Caco-2 (cell line): ENCODE measurements at regions of chr12 and their contacts with region 1.

Region 1: GRCh38 chr12:113727651-113728061 is 238.5 kb downstream of the RBM19 start:
- DNase-seq: peak; percentile 66 to 69
- H3K4me3 ChIP-seq: no peak overlapping the region
- H3K4me3 Mint-ChIP-seq: peak overlapping the region; percentile 35
- H3K27ac Mint-ChIP-seq: peak overlapping the region; percentile 69
- H3K4me1 ChIP-seq: peaks cover 16% of the 10 kb centered on the region
- H3K4me1 Mint-ChIP-seq: peaks cover 24% of the 10 kb centered on the region
- H3K27me3 ChIP-seq: no peaks in the 10 kb centered on the region
- H3K27me3 Mint-ChIP-seq: no peaks in the 10 kb centered on the region
- CTCF ChIP-seq: no peak

Region 2: GRCh38 chr12:113766879-113767878 is 39.5 kb after region 1 on chr12:
- CTCF ChIA-PET with region 1: no interaction called
- POLR2A ChIA-PET with region 1: no interaction called
- intact Hi-C with region 1: loop called (anchors 5 kb)
- DNase-seq: peak; percentile 52 to 71
- H3K4me3 ChIP-seq: no peak overlapping the region
- H3K4me3 Mint-ChIP-seq: no peak overlapping the region
- H3K27ac Mint-ChIP-seq: peak overlapping the region; percentile 20
- H3K4me1 ChIP-seq: peaks cover 32% of the 10 kb centered on the region
- H3K4me1 Mint-ChIP-seq: peaks cover 21% of the 10 kb centered on the region
- H3K27me3 ChIP-seq: no peaks in the 10 kb centered on the region
- H3K27me3 Mint-ChIP-seq: no peaks in the 10 kb centered on the region
- CTCF ChIP-seq: no peak